ENCODE measurements at regions of chr7 and their contacts with region 1.

Region 1: DNA sequence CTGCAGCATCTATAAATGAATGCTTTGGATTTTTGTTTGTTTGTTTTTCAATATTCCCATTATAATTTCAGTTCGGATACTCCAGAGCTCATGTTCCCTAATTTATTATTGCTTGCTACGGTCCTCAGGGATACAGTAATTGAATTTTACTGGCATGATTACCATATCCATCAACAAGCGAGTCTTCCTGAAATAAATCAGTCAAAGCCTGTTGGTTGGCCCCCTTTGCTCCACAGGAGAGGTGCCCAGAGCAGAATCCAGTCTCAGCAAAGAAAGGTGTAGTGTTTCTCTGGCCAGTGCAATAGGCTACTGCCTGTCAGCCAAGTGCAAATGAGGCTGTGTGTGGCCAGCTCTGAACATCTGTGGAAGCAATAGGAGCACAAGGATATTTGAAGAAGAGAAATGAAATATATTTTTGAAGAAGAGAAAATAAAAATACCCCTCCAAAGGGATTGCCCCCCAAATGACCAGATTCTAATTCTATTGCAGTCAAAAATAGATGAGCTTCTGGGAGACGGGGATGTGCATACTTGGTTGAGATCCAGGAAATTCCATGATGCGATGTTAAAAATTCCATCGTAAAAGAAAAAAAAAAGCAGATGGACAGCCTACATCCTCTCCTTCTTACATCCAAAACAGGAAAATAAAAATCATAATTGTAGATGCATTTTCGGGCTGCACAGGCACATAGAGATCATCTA is 18.1 kb downstream of the TRIL start:
- DNase-seq: no peak
- H3K4me3 ChIP-seq: no peak overlapping the region
- CTCF ChIP-seq: no peak
- POLR2A ChIP-seq: no peak

Region 2: DNA sequence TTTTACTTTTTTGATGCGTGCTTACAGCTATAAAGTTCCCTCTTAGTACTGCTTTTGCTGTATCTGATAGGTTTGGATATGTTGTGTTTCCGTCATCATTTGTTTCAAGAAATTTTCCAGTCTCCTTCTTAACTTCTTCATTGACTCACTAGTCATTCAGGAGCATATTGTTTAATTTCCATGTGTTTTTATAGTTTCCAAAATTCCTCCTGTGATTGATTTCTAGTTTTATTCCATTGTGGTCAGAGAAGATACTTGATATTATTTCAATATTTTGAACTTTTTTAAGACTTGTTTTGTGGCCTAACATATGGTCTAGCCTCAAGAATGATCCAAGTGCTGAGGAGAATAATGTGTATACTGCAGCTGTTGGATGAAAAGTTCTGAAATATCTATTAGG is 603.2 kb before region 1 on chr7:
- intact Hi-C with region 1: no loop called
- DNase-seq: no peak
- H3K4me3 ChIP-seq: no peak overlapping the region
- CTCF ChIP-seq: no peak
- POLR2A ChIP-seq: no peak

Region 3: DNA sequence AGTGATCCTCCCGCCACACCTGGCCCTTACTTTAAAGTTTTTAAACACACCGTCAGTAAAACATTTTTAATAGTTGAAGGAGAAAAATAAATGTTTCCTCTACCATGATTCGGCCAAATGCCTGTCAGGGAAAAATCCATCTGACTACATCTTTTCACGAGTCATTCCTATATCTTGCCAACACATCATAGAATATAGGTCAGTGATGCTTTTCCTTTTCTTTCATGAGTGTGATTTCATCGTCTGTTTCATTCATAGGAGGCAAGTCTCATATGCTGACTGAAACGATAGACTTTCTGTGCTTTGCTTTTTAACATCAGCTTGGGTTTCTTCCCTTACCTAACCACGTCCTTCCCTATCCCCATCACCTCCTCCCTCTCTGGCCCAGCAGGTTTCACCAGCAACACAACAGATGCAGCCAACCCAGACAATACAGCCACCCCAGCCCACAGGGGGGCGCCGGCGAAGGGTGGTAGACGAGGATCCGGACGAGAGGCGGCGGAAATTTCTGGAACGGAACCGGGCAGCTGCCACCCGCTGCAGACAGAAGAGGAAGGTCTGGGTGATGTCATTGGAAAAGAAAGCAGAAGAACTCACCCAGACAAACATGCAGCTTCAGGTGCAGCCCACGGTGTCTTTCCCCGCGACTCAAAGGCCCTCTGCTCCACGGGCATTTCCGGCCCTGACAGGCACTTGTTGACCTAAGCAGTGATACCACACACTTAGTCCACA is 131.0 kb before region 1 on chr7:
- intact Hi-C with region 1: no loop called
- DNase-seq: peak in 1 of 2 donors; percentile 87
- H3K4me3 ChIP-seq: no peak overlapping the region
- CTCF ChIP-seq: no peak
- POLR2A ChIP-seq: no peak

Region 4: DNA sequence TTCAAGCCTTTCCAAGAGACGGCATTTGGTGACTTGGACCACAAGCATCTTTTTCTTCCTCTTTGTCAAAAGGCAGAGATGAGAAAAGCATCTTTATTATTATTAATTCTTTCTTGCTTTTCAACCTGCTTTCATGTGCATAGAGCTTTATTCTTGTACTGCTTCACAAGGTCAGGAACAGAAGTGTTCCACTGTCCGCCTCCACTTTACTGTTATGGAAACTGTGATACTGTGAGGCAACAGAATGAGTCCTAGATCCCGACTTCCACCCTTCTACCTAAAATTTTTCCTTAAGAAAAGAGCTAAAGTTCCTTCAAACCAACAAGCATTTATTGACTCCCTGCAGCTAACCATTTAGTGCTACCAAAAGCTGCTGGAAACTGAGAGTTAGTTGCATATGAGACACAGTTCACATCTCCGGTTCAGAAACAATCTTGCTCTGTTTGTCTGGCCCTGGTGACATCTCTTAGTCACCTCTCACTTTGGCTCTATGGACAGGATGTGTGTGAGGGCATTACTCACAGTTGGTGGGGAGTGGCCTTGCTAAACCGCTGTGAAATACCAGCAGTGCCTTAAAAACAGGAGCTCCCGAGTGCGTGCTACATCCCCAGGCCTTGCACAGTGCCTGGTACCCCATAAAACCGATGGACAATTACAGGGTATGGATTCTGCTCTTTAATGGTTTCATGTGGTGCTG is 95.2 kb after region 1 on chr7:
- intact Hi-C with region 1: loop called (anchors 10 kb)
- DNase-seq: peak in 1 of 2 donors; percentile 49
- H3K4me3 ChIP-seq: no peak overlapping the region
- CTCF ChIP-seq: no peak
- POLR2A ChIP-seq: no peak

Measured in lower leg skin (tissue), 4 donors.